Activated CD4-positive, alpha-beta memory T cell treated with anti-CD3 and anti-CD28 coated beads, Interleukin-2, amount 10 ng/mL, durations not matched to agents 7 days and 5 days (primary cell): ENCODE measurements at regions of chr20 and their contacts with region 1.

Region 1: DNA sequence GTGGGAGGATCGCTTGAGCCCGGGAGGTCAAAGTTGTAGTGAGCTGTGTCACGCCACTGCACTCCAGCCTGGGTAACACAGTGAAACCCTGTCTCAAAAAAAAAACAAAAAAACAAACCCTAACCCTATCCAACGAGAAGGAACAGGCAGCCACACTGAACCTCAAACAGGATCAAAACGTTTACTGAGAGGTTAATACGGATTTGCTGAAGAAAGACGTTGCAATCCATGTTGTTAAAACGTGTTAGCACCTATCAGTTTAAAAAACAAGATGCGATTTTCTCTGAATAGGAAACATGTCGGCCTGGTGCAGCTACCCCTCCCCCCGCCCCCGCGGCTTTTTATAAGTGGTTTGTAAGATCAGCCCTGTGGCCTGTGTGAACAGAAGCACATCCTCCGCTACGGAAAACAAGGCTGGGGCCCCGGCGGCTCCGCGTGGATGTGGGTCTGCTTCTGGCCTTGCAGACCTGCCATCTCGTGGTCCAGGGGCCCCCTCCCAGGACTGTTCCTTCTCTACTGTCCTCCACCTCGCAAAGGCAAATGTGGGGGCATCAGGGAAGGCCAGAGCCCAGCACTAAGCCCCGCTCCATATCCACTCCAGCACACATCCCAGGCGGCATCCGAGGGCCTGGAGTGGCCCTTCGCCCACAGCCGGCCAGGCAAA is 11.4 kb downstream of the SLC2A4RG start:
- DNase-seq: peak; percentile 75
- H3K4me3 Mint-ChIP-seq: peak overlapping the region; percentile 51
- H3K27ac Mint-ChIP-seq: peak overlapping the region; percentile 87
- H3K4me1 Mint-ChIP-seq: peaks cover 22% of the 10 kb centered on the region
- H3K27me3 Mint-ChIP-seq: peaks cover 3% of the 10 kb centered on the region

Region 2: GRCh38 chr20:63739130-63740069 is 11.5 kb before region 1 on chr20 and contains the start of gene SLC2A4RG:
- CTCF ChIA-PET with region 1: interaction called, 3 read pairs
- POLR2A ChIA-PET with region 1: interaction called, 30 read pairs
- DNase-seq: peak; percentile 76
- H3K4me3 Mint-ChIP-seq: peak within 1 kb of the TSS; percentile 62
- H3K27ac Mint-ChIP-seq: peak within 1 kb of the TSS; percentile 16
- H3K4me1 Mint-ChIP-seq: peaks cover 18% of the 10 kb centered on the region
- H3K27me3 Mint-ChIP-seq: no peaks in the 10 kb centered on the region
- total RNA-seq, gene SLC2A4RG: 88.3 to 90.4 TPM